ENCODE measurements at regions of chr10 and their contacts with region 1.

Region 1: DNA sequence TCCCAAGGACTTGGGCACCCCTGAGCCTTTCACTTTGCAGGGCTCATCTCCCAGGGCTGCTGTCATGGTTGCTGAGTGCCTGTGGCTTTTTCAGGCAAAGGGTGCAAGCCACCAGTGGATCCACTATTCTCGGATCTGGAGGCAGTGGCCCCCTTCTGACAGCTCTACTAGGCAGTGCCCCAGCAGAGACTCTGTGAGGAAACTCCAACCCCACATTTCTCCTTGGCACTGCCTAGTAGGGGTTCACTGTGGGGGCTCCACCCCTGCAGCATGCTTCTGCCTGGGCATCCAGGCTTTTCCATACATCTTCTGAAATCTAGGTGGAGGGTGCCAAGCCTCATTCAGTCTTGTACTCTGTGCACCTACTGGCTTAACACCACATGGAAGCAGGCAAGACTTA is 675.0 kb upstream of the MBL2 start:
- DNase-seq: no peak
- ATAC-seq: no peak
- H3K4me3 ChIP-seq: no peak overlapping the region
- H3K4me3 Mint-ChIP-seq: no peak overlapping the region
- H3K27ac ChIP-seq: no peak overlapping the region
- H3K27ac Mint-ChIP-seq: no peak overlapping the region
- H3K4me1 ChIP-seq: no peaks in the 10 kb centered on the region
- H3K4me1 Mint-ChIP-seq: no peaks in the 10 kb centered on the region
- H3K27me3 ChIP-seq: no peaks in the 10 kb centered on the region
- H3K27me3 Mint-ChIP-seq: no peaks in the 10 kb centered on the region
- CTCF ChIP-seq: no peak

Region 2: DNA sequence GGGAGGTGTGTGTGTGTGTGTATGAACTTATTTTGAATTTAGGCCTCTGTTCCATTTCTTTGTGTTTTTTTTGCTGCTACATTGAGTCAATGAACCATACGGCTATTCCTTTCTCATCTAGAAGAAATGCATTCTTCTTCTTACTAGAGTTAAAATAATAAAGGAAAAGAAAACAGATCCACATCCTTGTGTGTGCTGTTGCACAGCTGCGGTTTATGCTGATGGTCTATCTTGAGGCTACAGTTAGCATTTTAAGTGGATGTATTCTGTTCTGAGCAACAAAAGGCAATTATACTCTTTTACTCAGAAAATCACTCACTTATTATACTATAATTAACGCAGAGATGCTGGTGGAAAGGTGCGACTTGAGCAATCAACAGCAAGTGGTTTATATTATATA is 60.0 kb before region 1 on chr10:
- CTCF ChIA-PET with region 1: no interaction called
- POLR2A ChIA-PET with region 1: no interaction called
- intact Hi-C with region 1: loop called in 1 of 2 experiments (anchors 5 kb)
- DNase-seq: no peak
- ATAC-seq: no peak
- H3K4me3 ChIP-seq: no peak overlapping the region
- H3K4me3 Mint-ChIP-seq: no peak overlapping the region
- H3K27ac ChIP-seq: no peak overlapping the region
- H3K27ac Mint-ChIP-seq: no peak overlapping the region
- H3K4me1 ChIP-seq: no peaks in the 10 kb centered on the region
- H3K4me1 Mint-ChIP-seq: no peaks in the 10 kb centered on the region
- H3K27me3 ChIP-seq: no peaks in the 10 kb centered on the region
- H3K27me3 Mint-ChIP-seq: no peaks in the 10 kb centered on the region
- CTCF ChIP-seq: no peak

Measured in CD4-positive, alpha-beta T cell (primary cell).